Dorsolateral prefrontal cortex (tissue), 120 donors: ENCODE measurements at regions of chr14 and their contacts with region 1.

Region 1: DNA sequence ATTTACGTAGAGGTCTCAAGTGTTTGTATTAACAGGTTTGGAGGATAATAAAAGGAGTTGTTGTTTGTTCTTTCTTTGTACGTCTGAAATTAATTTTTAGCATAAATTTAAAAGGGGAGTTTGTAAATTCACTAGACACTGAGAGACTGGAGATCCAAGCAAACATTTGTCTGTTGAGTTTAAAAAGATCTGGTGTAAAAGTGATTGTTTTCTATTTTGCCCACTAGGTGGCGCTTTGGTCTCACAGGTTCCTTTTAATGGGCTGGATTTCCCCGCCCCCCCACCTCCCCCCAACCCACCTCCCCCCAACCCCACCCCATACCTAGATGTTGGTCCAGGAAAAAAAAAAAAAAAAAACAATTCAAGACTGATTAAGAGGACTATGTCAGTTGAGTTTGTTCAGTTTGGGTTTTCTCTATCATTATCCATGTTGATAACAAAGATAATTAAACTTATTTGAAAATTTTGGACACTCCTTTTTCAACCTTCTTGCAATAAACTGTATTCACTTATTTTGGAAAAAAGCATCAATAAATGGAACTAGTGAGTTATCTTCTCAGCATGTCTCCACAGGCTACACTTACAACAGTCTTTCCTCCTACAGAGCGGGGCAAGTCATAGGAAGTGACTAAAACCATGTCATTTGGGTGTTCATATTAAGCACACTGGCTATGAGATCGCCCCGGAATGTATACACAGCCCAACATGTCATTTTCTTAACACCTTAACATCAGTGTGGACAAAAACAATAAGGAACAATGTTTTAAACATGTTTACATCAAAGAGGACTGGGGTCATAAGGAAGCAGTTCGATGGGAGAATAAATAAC is 841.1 kb downstream of the NRXN3 start:
- DNase-seq: peak in 1 of 10 donors; percentile 40
- H3K4me3 ChIP-seq: no peak overlapping the region
- H3K27ac ChIP-seq: no peak overlapping the region
- H3K27me3 ChIP-seq: no peaks in the 10 kb centered on the region
- CTCF ChIP-seq: peak; percentile 42 to 77 (median 60)

Region 2: GRCh38 chr14:79256380-79256779 is 245.1 kb after region 1 on chr14:
- intact Hi-C with region 1: loop called in 1 of 2 experiments (anchors 5 kb)
- DNase-seq: no peak
- H3K4me3 ChIP-seq: no peak overlapping the region
- H3K27ac ChIP-seq: peak overlapping the region in 2 of 59 donors; percentile 15 to 53
- H3K27me3 ChIP-seq: no peaks in the 10 kb centered on the region
- CTCF ChIP-seq: peak in 18 of 56 donors; percentile 8 to 51 (median 23)

Region 3: GRCh38 chr14:79693935-79694334 is 682.6 kb after region 1 on chr14:
- intact Hi-C with region 1: loop called in 1 of 2 experiments (anchors 10 kb)
- DNase-seq: no peak
- H3K4me3 ChIP-seq: no peak overlapping the region
- H3K27ac ChIP-seq: no peak overlapping the region
- H3K27me3 ChIP-seq: no peaks in the 10 kb centered on the region
- CTCF ChIP-seq: no peak